GM12878 (cell line): ENCODE measurements at regions of chr3 and their contacts with region 1.

Region 1: DNA sequence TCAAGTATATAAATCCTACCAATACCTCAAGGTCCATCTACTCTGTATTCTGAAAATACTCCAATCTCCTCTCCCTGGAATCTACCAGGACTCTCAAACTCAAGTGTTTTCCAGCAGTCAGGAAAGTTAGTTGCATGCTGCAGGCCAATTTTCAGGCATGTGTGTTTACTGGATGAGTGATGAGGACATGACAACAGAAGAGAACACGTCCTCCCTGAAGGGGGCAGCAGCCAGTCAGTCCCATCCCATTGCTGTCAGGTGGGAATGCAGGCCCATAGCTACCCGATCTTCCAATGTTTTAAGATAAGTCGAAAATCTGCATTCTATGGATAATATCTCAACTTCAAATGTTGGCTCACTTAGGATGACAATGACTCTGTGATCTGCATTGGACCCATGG is 496.2 kb downstream of the FHIT start:
- DNase-seq: no peak
- ATAC-seq: peak; percentile 38; the same call in 1 of the 3 replicates
- H3K4me3 ChIP-seq: no peak overlapping the region
- H3K27ac ChIP-seq: no peak overlapping the region
- H3K4me1 ChIP-seq: no peaks in the 10 kb centered on the region
- H3K27me3 ChIP-seq: no peaks in the 10 kb centered on the region
- CTCF ChIP-seq: peak; percentile 18 to 40 (median 32); a peak in 4 of 6 replicates
- EP300 ChIP-seq: no peak
- POLR2A ChIP-seq: no peak
- RAD21 ChIP-seq: peak; percentile 28; the same call in 1 of the 2 replicates

Region 2: DNA sequence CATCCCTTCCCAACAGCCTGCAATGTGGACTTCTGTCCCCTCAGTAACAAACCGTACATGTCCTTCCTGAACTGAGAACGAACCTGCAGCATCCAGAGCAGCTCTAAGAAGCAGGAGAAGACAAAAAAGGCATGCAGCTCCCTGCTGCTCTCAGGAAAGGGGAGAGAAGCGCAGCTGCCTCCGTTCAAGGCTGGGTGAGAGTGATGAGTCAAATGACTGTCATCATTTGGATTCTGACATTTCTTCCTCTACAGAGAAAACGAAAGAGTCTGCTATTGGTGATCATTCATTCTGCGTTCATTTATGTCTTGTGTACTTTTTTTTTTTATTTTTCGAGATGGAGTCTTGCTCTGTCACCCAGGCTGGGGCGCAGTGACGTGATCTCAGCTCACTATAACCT is 181.6 kb before region 1 on chr3:
- CTCF ChIA-PET with region 1: no interaction called
- POLR2A ChIA-PET with region 1: no interaction called
- RAD21 ChIA-PET with region 1: no interaction called
- SMC1A ChIA-PET with region 1: no interaction called
- in situ Hi-C with region 1: no loop called
- intact Hi-C with region 1: no loop called
- DNase-seq: no peak
- ATAC-seq: no peak
- H3K4me3 ChIP-seq: no peak overlapping the region
- H3K27ac ChIP-seq: no peak overlapping the region
- H3K4me1 ChIP-seq: no peaks in the 10 kb centered on the region
- H3K27me3 ChIP-seq: no peaks in the 10 kb centered on the region
- CTCF ChIP-seq: no peak
- EP300 ChIP-seq: no peak
- POLR2A ChIP-seq: no peak
- RAD21 ChIP-seq: no peak

Region 3: DNA sequence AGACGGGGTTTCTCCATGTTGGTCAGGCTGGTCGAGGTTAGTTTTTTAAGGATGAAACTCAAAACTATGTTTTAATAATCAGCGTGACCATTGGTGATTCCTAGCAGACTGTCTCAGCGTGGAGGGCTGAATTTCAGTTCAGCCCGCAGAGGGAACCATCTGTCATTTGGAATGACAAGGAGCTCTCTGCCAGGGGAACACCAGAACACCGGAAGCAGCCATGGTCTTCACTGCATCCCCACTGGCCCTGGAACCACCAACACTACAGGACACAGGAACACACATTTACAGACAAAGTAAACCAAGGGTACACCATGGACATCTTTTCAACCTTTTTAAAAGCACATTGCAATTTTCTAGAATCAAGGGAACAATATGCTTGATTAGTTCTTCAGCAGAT is 71.4 kb after region 1 on chr3:
- CTCF ChIA-PET with region 1: no interaction called
- POLR2A ChIA-PET with region 1: no interaction called
- RAD21 ChIA-PET with region 1: no interaction called
- SMC1A ChIA-PET with region 1: no interaction called
- in situ Hi-C with region 1: no loop called
- intact Hi-C with region 1: no loop called
- DNase-seq: no peak
- ATAC-seq: no peak
- H3K4me3 ChIP-seq: no peak overlapping the region
- H3K27ac ChIP-seq: no peak overlapping the region
- H3K4me1 ChIP-seq: no peaks in the 10 kb centered on the region
- H3K27me3 ChIP-seq: no peaks in the 10 kb centered on the region
- CTCF ChIP-seq: no peak
- EP300 ChIP-seq: no peak
- POLR2A ChIP-seq: no peak
- RAD21 ChIP-seq: no peak

Region 4: GRCh38 chr3:60839246-60839645 is 84.2 kb after region 1 on chr3:
- CTCF ChIA-PET with region 1: no interaction called
- POLR2A ChIA-PET with region 1: no interaction called
- RAD21 ChIA-PET with region 1: no interaction called
- SMC1A ChIA-PET with region 1: no interaction called
- in situ Hi-C with region 1: no loop called
- intact Hi-C with region 1: no loop called
- DNase-seq: no peak
- ATAC-seq: no peak
- H3K4me3 ChIP-seq: no peak overlapping the region
- H3K27ac ChIP-seq: no peak overlapping the region
- H3K4me1 ChIP-seq: no peaks in the 10 kb centered on the region
- H3K27me3 ChIP-seq: no peaks in the 10 kb centered on the region
- CTCF ChIP-seq: peak in 1 of 3 experiments; percentile 5; a peak in 1 of 6 replicates
- EP300 ChIP-seq: no peak
- POLR2A ChIP-seq: no peak
- RAD21 ChIP-seq: no peak

Region 5: GRCh38 chr3:61381745-61382392 is 626.8 kb after region 1 on chr3:
- CTCF ChIA-PET with region 1: interaction called, 10 read pairs
- POLR2A ChIA-PET with region 1: interaction called, 3 read pairs
- RAD21 ChIA-PET with region 1: interaction called, 8 read pairs
- SMC1A ChIA-PET with region 1: interaction called, 7 read pairs
- in situ Hi-C with region 1: loop called (anchors 10 kb)
- intact Hi-C with region 1: loop called (anchors 5 kb)
- DNase-seq: no peak
- ATAC-seq: peak; percentile 99
- H3K4me3 ChIP-seq: no peak overlapping the region
- H3K27ac ChIP-seq: no peak overlapping the region
- H3K4me1 ChIP-seq: no peaks in the 10 kb centered on the region
- H3K27me3 ChIP-seq: no peaks in the 10 kb centered on the region; a peak in 1 of 4 replicates
- CTCF ChIP-seq: peak; percentile 58 to 73 (median 61); a peak in 5 of 6 replicates
- EP300 ChIP-seq: no peak
- POLR2A ChIP-seq: no peak
- RAD21 ChIP-seq: peak; percentile 85